ENCODE measurements at regions of chr2 and their contacts with region 1.

Region 1: GRCh38 chr2:8525582-8526402 is 156.1 kb upstream of the ID2 start:
- DNase-seq: peak; percentile 83
- H3K4me3 Mint-ChIP-seq: no peak overlapping the region
- H3K27ac Mint-ChIP-seq: no peak overlapping the region
- H3K4me1 Mint-ChIP-seq: no peaks in the 10 kb centered on the region
- H3K27me3 Mint-ChIP-seq: no peaks in the 10 kb centered on the region
- CTCF ChIP-seq: no peak

Region 2: GRCh38 chr2:7649461-7650228 is 876.1 kb before region 1 on chr2:
- CTCF ChIA-PET with region 1: no interaction called
- POLR2A ChIA-PET with region 1: no interaction called
- intact Hi-C with region 1: loop called (anchors 5 kb)
- DNase-seq: no peak
- H3K4me3 Mint-ChIP-seq: no peak overlapping the region
- H3K27ac Mint-ChIP-seq: no peak overlapping the region
- H3K4me1 Mint-ChIP-seq: no peaks in the 10 kb centered on the region
- H3K27me3 Mint-ChIP-seq: no peaks in the 10 kb centered on the region
- CTCF ChIP-seq: no peak

Region 3: DNA sequence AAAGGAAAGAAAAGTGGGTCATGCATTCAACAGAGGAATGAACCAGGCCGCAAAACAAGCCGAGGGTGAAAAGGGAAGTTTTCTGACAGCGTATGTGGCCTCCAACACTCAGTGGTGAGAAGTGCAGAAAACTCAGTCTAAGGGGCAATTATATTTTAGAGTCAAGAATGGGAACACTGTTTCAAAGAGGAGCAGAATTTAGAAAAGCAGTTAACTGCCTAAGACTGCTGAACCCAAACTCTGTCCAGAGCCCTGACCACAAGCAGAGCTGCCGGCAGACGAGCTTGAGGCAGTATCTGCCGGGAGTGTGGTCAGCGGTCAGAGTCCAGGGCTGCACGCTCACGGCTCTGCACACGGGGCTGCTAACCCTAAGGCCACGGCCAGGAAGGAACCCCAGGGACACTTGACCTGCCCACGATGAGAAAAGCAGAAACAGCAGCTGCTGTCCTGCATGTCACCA is 190.9 kb before region 1 on chr2:
- CTCF ChIA-PET with region 1: no interaction called
- POLR2A ChIA-PET with region 1: no interaction called
- intact Hi-C with region 1: no loop called
- DNase-seq: no peak
- H3K4me3 Mint-ChIP-seq: no peak overlapping the region
- H3K27ac Mint-ChIP-seq: no peak overlapping the region
- H3K4me1 Mint-ChIP-seq: no peaks in the 10 kb centered on the region
- H3K27me3 Mint-ChIP-seq: no peaks in the 10 kb centered on the region
- CTCF ChIP-seq: no peak

Measured in MCF 10A (cell line).